CD4-positive, alpha-beta T cell (primary cell): ENCODE measurements at regions of chr20 and their contacts with region 1.

Region 1: GRCh38 chr20:44069203-44070011 is 117.6 kb downstream of the JPH2 start:
- DNase-seq: peak; percentile 60 to 93 (median 70)
- ATAC-seq: peak; percentile 62
- H3K4me3 ChIP-seq: peak overlapping the region; percentile 52
- H3K4me3 Mint-ChIP-seq: peak overlapping the region; percentile 85
- H3K27ac ChIP-seq: peak overlapping the region; percentile 84 to 97
- H3K27ac Mint-ChIP-seq: peak overlapping the region; percentile 97
- H3K4me1 ChIP-seq: peaks cover 80% of the 10 kb centered on the region
- H3K4me1 Mint-ChIP-seq: peaks cover 75% of the 10 kb centered on the region
- H3K27me3 ChIP-seq: no peaks in the 10 kb centered on the region
- H3K27me3 Mint-ChIP-seq: no peaks in the 10 kb centered on the region
- CTCF ChIP-seq: no peak

Region 2: DNA sequence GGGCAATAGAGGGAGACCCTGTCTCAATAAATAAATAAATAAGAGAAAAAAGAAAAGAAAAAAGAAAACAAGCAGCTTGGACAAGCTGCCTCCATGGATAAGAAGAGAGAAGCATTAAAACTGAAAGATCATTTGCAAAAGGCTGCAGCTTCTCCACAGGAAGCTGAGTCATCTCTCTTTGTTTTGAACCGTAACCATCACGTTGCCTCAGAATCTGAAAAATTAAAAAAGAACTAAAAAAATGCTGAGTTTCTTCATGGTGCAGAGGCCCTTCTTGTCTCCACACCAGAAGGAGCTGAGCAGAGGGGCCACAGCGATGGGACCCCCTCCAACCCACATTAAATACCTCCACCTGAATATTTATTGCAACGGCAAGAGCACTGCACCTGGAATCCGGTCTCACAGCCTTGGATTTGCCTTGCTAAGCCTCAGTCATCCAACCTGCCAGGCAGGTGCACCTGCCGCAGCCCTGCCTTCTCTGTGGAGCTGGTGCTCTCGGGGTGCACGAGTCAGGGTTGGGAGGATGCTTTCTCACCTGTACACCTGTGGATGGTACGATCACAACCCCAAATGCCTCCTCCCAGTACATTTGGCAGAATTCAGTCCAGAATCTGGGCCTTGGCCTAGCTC is 126.6 kb before region 1 on chr20:
- CTCF ChIA-PET with region 1: no interaction called
- POLR2A ChIA-PET with region 1: interaction called, 10 read pairs
- intact Hi-C with region 1: no loop called
- DNase-seq: peak in 5 of 14 experiments; percentile 20 to 66 (median 56)
- ATAC-seq: peak; percentile 71
- H3K4me3 ChIP-seq: no peak overlapping the region
- H3K4me3 Mint-ChIP-seq: peak overlapping the region; percentile 53
- H3K27ac ChIP-seq: peak overlapping the region in 1 of 2 donors; percentile 30
- H3K27ac Mint-ChIP-seq: peak overlapping the region; percentile 85
- H3K4me1 ChIP-seq: peaks cover 80% of the 10 kb centered on the region
- H3K4me1 Mint-ChIP-seq: peaks cover 86% of the 10 kb centered on the region
- H3K27me3 ChIP-seq: no peaks in the 10 kb centered on the region
- H3K27me3 Mint-ChIP-seq: no peaks in the 10 kb centered on the region
- CTCF ChIP-seq: no peak

Region 3: DNA sequence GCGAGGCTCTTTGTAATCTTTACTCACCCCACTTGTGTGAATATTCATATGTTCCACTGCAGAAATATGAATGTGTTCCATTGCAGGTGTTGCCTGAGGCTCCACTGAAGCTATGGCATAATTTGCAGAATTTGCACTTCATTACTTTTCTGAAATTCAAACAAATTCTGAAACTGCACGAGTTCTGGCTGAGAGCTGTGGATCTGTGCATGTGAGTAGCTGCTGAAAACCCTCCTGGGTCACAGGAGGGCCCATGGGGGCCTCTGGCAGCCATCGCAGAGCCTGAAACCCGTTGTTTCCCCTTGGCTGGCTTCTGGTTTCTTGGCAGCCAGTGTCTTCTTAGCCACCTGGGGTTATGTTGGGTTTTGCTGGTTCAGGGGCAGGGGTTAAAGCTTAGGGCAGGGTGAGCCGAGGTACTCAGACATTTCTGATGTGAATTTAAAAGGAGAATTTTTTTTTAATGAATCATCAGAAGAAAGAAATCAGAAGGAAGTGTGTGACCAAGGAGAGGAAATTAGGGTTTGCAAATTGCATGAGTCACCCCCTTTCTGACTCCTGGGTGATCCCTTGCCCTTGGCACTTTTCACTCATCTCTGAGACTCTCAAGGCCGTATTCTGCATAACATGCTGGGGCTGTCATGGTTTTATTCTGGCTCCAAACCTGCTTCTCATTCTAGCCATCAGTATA is 114.2 kb before region 1 on chr20:
- CTCF ChIA-PET with region 1: no interaction called
- POLR2A ChIA-PET with region 1: interaction called, 5 read pairs
- intact Hi-C with region 1: loop called (anchors 1 to 5 kb)
- DNase-seq: peak in 12 of 14 experiments; percentile 19 to 75 (median 45)
- ATAC-seq: peak; percentile 62
- H3K4me3 ChIP-seq: no peak overlapping the region
- H3K4me3 Mint-ChIP-seq: peak overlapping the region; percentile 44
- H3K27ac ChIP-seq: no peak overlapping the region
- H3K27ac Mint-ChIP-seq: peak overlapping the region; percentile 29
- H3K4me1 ChIP-seq: peaks cover 85% of the 10 kb centered on the region
- H3K4me1 Mint-ChIP-seq: peaks cover 88% of the 10 kb centered on the region
- H3K27me3 ChIP-seq: no peaks in the 10 kb centered on the region
- H3K27me3 Mint-ChIP-seq: peaks cover 6% of the 10 kb centered on the region
- CTCF ChIP-seq: no peak

Region 4: GRCh38 chr20:43969501-43970182 is 99.8 kb before region 1 on chr20:
- CTCF ChIA-PET with region 1: interaction called, 3 read pairs
- POLR2A ChIA-PET with region 1: interaction called, 10 read pairs
- intact Hi-C with region 1: loop called in 1 of 2 experiments (anchors 5 kb)
- DNase-seq: peak in 1 of 14 experiments; percentile 15
- ATAC-seq: no peak
- H3K4me3 ChIP-seq: no peak overlapping the region
- H3K4me3 Mint-ChIP-seq: no peak overlapping the region
- H3K27ac ChIP-seq: no peak overlapping the region
- H3K27ac Mint-ChIP-seq: no peak overlapping the region
- H3K4me1 ChIP-seq: peaks cover 17% of the 10 kb centered on the region
- H3K4me1 Mint-ChIP-seq: no peaks in the 10 kb centered on the region
- H3K27me3 ChIP-seq: peaks cover 0 to 2% of the 10 kb centered on the region in 2 experiments
- H3K27me3 Mint-ChIP-seq: no peaks in the 10 kb centered on the region
- CTCF ChIP-seq: no peak

Region 5: GRCh38 chr20:44038681-44039123 is 30.7 kb before region 1 on chr20:
- CTCF ChIA-PET with region 1: no interaction called
- POLR2A ChIA-PET with region 1: no interaction called
- intact Hi-C with region 1: no loop called
- DNase-seq: no peak
- ATAC-seq: no peak
- H3K4me3 ChIP-seq: no peak overlapping the region
- H3K4me3 Mint-ChIP-seq: no peak overlapping the region
- H3K27ac ChIP-seq: no peak overlapping the region
- H3K27ac Mint-ChIP-seq: no peak overlapping the region
- H3K4me1 ChIP-seq: peaks cover 5% of the 10 kb centered on the region
- H3K4me1 Mint-ChIP-seq: peaks cover 11% of the 10 kb centered on the region
- H3K27me3 ChIP-seq: peaks cover 0 to 4% of the 10 kb centered on the region in 2 experiments
- H3K27me3 Mint-ChIP-seq: no peaks in the 10 kb centered on the region
- CTCF ChIP-seq: no peak

Region 6: DNA sequence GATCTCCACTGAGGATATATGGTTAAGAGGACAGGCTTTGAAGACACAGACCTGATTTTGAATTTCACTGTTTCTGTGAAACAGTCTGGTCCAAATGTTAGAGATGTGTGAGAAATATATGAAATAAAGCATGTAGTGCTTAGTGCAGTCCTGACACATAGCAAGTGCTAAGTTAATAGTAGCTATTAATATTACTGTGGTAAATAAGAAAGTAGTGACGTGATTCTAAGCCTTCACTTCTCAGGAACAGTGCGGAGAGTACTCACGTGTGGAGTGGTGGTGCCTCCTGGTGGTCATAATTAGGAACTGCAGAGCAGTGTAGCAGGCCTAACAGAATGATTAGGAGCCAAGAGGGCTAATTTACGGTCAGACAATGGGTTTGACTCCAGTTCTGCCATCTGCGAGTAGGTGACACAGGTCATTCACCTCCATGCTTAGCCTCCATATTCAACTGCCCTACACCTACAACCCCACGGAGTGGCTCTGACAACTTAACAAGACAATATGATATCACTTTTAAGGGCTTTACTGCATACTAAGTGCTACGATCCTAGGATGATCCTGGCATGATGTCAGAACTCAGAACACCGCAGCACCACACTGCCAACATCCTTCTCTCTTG is 11.3 kb after region 1 on chr20:
- CTCF ChIA-PET with region 1: interaction called, 11 read pairs
- POLR2A ChIA-PET with region 1: interaction called, 15 read pairs
- intact Hi-C with region 1: loop called in 1 of 2 experiments (anchors 1 kb)
- DNase-seq: peak; percentile 67 to 90 (median 76)
- ATAC-seq: peak; percentile 97
- H3K4me3 ChIP-seq: no peak overlapping the region
- H3K4me3 Mint-ChIP-seq: no peak overlapping the region
- H3K27ac ChIP-seq: no peak overlapping the region
- H3K27ac Mint-ChIP-seq: peak overlapping the region; percentile 61
- H3K4me1 ChIP-seq: peaks cover 12% of the 10 kb centered on the region
- H3K4me1 Mint-ChIP-seq: peaks cover 33% of the 10 kb centered on the region
- H3K27me3 ChIP-seq: no peaks in the 10 kb centered on the region
- H3K27me3 Mint-ChIP-seq: no peaks in the 10 kb centered on the region
- CTCF ChIP-seq: peak; percentile 98